Transverse colon (tissue), 4 donors: ENCODE measurements at regions of chr20 and their contacts with region 1.

Region 1: DNA sequence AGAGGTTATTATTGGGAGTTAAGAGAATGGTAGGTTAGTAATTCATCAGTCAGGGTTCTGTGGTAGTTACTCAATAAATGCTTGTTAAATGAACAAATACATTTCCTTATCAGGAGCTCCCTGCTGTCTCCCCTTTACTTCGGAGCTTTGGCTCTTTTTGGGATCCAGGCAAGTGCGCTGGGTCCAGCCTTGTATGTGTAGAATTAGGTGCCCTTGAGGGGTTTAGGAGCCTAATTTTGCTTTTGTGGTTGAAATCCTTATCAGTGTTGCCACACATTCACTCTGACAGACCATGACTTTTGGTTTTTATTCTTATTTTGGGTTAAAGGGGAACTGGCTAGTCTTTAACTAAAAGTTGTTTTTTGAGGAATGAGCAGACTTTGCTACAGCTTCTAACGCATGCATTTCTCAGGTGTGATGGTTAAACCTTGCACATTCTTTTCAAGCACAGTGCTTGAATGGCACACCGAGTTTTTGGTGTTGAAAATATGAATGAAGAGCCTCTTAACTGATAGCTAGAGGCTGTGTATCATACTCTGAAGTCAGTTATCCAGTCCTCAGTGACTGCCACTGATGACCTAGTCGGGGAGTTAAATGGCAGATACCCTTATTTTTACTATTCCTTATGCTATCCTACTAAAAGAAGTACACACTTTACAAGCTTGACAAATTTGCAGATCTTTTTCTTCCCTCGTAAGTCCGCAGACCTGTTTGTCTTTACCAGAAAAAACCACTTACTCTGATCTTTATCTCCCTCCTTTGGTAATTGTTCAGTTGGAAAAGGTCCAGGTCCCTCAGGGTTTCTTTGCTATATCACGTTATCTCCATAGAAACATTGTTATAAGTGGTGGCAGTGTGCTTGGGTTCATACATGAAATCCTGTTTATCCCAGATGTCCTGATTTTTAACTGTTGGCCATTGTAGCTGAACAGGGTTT is 50.7 kb upstream of the PLCG1 start:
- DNase-seq: no peak
- H3K4me3 ChIP-seq: no peak overlapping the region
- H3K27ac ChIP-seq: peak overlapping the region; percentile 5 to 33 (median 12)
- H3K4me1 ChIP-seq: peaks cover 0 to 22% (median 12%) of the 10 kb centered on the region in 4 donors
- H3K27me3 ChIP-seq: no peaks in the 10 kb centered on the region
- CTCF ChIP-seq: no peak
- EP300 ChIP-seq: no peak
- POLR2A ChIP-seq: no peak

Region 2: DNA sequence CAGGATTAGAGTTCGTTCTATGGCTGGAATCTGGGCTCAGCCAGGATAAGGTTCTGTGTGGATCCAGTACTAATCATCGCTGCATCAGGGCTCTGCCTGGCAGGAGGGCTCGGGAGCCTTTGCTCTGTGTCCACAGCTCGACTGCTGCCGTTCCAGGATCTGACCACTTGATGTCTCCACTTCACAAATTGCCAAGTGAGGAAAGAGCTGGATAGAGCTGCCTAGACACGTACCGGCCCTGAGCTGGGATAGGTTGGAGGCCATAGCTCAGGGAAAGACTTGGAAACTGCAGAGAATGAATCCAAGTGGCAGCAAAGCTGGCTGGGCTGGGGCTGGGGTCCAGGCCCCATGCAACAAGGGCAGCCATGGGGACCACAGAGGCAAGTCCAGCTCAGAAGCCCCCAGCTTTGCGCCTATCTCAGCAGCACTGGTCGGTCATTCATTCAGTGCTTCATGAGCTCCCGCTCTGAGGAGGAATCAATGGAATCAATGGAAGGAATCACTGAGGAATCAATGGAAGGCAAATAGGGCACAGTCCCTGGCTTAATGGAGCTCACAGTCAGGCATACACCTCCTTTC is 96.0 kb before region 1 on chr20:
- in situ Hi-C with region 1: loop called in 1 of 4 experiments (anchors 10 kb)
- intact Hi-C with region 1: loop called (anchors 5 kb)
- DNase-seq: peak; percentile 86
- H3K4me3 ChIP-seq: no peak overlapping the region
- H3K27ac ChIP-seq: peak overlapping the region in 2 of 4 donors; percentile 2 to 26
- H3K4me1 ChIP-seq: peaks cover 0 to 13% (median 3%) of the 10 kb centered on the region in 4 donors
- H3K27me3 ChIP-seq: no peaks in the 10 kb centered on the region
- CTCF ChIP-seq: peak; percentile 74 to 86 (median 76)
- EP300 ChIP-seq: no peak
- POLR2A ChIP-seq: no peak

Region 3: GRCh38 chr20:41098703-41099250 is 12.1 kb after region 1 on chr20:
- in situ Hi-C with region 1: no loop called
- intact Hi-C with region 1: no loop called
- DNase-seq: no peak
- H3K4me3 ChIP-seq: no peak overlapping the region
- H3K27ac ChIP-seq: no peak overlapping the region
- H3K4me1 ChIP-seq: peaks cover 0 to 4% (median 0%) of the 10 kb centered on the region in 4 donors
- H3K27me3 ChIP-seq: no peaks in the 10 kb centered on the region
- CTCF ChIP-seq: no peak
- EP300 ChIP-seq: no peak
- POLR2A ChIP-seq: no peak